CD8-positive, alpha-beta memory T cell (primary cell): ENCODE measurements at regions of chr2 and their contacts with region 1.

Region 1: GRCh38 chr2:130342533-130343275 is at the start of gene IMP4:
- DNase-seq: peak; percentile 89 to 98 (median 96)
- H3K4me3 ChIP-seq: peak within 1 kb of the TSS; percentile 90
- H3K4me3 Mint-ChIP-seq: peak within 1 kb of the TSS; percentile 96 to 100 (median 99)
- H3K27ac ChIP-seq: peak within 1 kb of the TSS; percentile 95
- H3K27ac Mint-ChIP-seq: peak within 1 kb of the TSS; percentile 93 to 100 (median 98)
- H3K4me1 ChIP-seq: peaks cover 25% of the 10 kb centered on the region
- H3K4me1 Mint-ChIP-seq: peaks cover 38 to 55% (median 49%) of the 10 kb centered on the region in 3 donors
- H3K27me3 ChIP-seq: no peaks in the 10 kb centered on the region
- H3K27me3 Mint-ChIP-seq: no peaks in the 10 kb centered on the region
- total RNA-seq, gene IMP4: 227 to 239 TPM

Region 2: GRCh38 chr2:130181325-130181879 is 161.3 kb before region 1 on chr2 and contains the start of gene SMPD4:
- CTCF ChIA-PET with region 1: interaction called, 21 read pairs
- POLR2A ChIA-PET with region 1: interaction called, 40 read pairs
- DNase-seq: peak; percentile 97 to 99 (median 98)
- H3K4me3 ChIP-seq: peak within 1 kb of the TSS; percentile 94
- H3K4me3 Mint-ChIP-seq: peak within 1 kb of the TSS; percentile 89 to 97 (median 91)
- H3K27ac ChIP-seq: peak within 1 kb of the TSS; percentile 90
- H3K27ac Mint-ChIP-seq: peak within 1 kb of the TSS; percentile 93 to 98 (median 95)
- H3K4me1 ChIP-seq: peaks cover 23% of the 10 kb centered on the region
- H3K4me1 Mint-ChIP-seq: peaks cover 18 to 44% (median 25%) of the 10 kb centered on the region in 3 donors
- H3K27me3 ChIP-seq: no peaks in the 10 kb centered on the region
- H3K27me3 Mint-ChIP-seq: peaks cover 0 to 4% of the 10 kb centered on the region in 2 donors
- total RNA-seq, gene SMPD4: 111 to 113 TPM

Region 3: GRCh38 chr2:130261970-130262760 is 80.5 kb before region 1 on chr2:
- CTCF ChIA-PET with region 1: no interaction called
- POLR2A ChIA-PET with region 1: no interaction called
- DNase-seq: no peak
- H3K4me3 ChIP-seq: no peak overlapping the region
- H3K4me3 Mint-ChIP-seq: no peak overlapping the region
- H3K27ac ChIP-seq: no peak overlapping the region
- H3K27ac Mint-ChIP-seq: no peak overlapping the region
- H3K4me1 ChIP-seq: no peaks in the 10 kb centered on the region
- H3K4me1 Mint-ChIP-seq: no peaks in the 10 kb centered on the region
- H3K27me3 ChIP-seq: no peaks in the 10 kb centered on the region
- H3K27me3 Mint-ChIP-seq: peaks cover 7 to 46% of the 10 kb centered on the region in 2 donors

Region 4: DNA sequence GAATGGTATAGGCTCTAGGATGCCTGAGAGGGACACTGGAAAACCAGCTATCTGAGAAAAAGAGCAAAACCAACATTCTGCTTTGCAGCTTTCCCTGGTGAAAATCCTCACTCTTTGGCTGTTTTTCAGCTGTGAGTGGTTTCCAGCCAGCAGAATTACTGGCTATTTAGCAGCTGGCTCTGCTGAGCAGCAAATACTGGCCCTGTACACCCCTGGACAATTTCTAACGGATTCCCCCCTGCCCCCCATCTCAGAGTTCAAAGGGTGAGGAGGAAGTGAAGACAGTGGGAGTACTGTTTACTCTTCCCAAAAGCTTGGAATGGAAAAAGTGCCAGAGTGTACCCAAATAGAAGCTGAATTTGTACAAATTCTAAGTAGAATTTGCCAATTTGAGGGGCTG is 26.1 kb before region 1 on chr2:
- CTCF ChIA-PET with region 1: no interaction called
- POLR2A ChIA-PET with region 1: no interaction called
- DNase-seq: no peak
- H3K4me3 ChIP-seq: no peak overlapping the region
- H3K4me3 Mint-ChIP-seq: no peak overlapping the region
- H3K27ac ChIP-seq: no peak overlapping the region
- H3K27ac Mint-ChIP-seq: no peak overlapping the region
- H3K4me1 ChIP-seq: no peaks in the 10 kb centered on the region
- H3K4me1 Mint-ChIP-seq: no peaks in the 10 kb centered on the region
- H3K27me3 ChIP-seq: no peaks in the 10 kb centered on the region
- H3K27me3 Mint-ChIP-seq: peaks cover 8 to 18% of the 10 kb centered on the region in 2 donors

Region 5: GRCh38 chr2:130332271-130333073 is 10.2 kb before region 1 on chr2:
- CTCF ChIA-PET with region 1: interaction called, 37 read pairs
- POLR2A ChIA-PET with region 1: interaction called, 7 read pairs
- DNase-seq: peak; percentile 52 to 77 (median 57)
- H3K4me3 ChIP-seq: no peak overlapping the region
- H3K4me3 Mint-ChIP-seq: peak overlapping the region in 5 of 7 donors; percentile 2 to 64 (median 50)
- H3K27ac ChIP-seq: no peak overlapping the region
- H3K27ac Mint-ChIP-seq: peak overlapping the region in 3 of 8 donors; percentile 10 to 64 (median 18)
- H3K4me1 ChIP-seq: peaks cover 4% of the 10 kb centered on the region
- H3K4me1 Mint-ChIP-seq: peaks cover 5 to 7% (median 6%) of the 10 kb centered on the region in 3 donors
- H3K27me3 ChIP-seq: no peaks in the 10 kb centered on the region
- H3K27me3 Mint-ChIP-seq: peaks cover 18 to 37% of the 10 kb centered on the region in 2 donors

Region 6: GRCh38 chr2:130355578-130356431 is 13.1 kb after region 1 on chr2 and contains the start of gene PTPN18:
- CTCF ChIA-PET with region 1: interaction called, 8 read pairs
- POLR2A ChIA-PET with region 1: interaction called, 12 read pairs
- DNase-seq: peak; percentile 44 to 70 (median 54)
- H3K4me3 ChIP-seq: peak within 1 kb of the TSS; percentile 66
- H3K4me3 Mint-ChIP-seq: peak within 1 kb of the TSS; percentile 81 to 91 (median 84)
- H3K27ac ChIP-seq: peak within 1 kb of the TSS; percentile 43
- H3K27ac Mint-ChIP-seq: peak within 1 kb of the TSS in 7 of 8 donors; percentile 50 to 92 (median 60)
- H3K4me1 ChIP-seq: peaks cover 5% of the 10 kb centered on the region
- H3K4me1 Mint-ChIP-seq: peaks cover 14 to 15% (median 15%) of the 10 kb centered on the region in 3 donors
- H3K27me3 ChIP-seq: no peaks in the 10 kb centered on the region
- H3K27me3 Mint-ChIP-seq: no peaks in the 10 kb centered on the region
- total RNA-seq, gene PTPN18: 55.1 to 60.0 TPM

Region 7: GRCh38 chr2:130372055-130372832 is 29.5 kb after region 1 on chr2:
- CTCF ChIA-PET with region 1: interaction called, 23 read pairs
- POLR2A ChIA-PET with region 1: interaction called, 17 read pairs
- DNase-seq: peak; percentile 57 to 80 (median 70)
- H3K4me3 ChIP-seq: peak overlapping the region; percentile 85
- H3K4me3 Mint-ChIP-seq: peak overlapping the region; percentile 92 to 97 (median 95)
- H3K27ac ChIP-seq: peak overlapping the region; percentile 76
- H3K27ac Mint-ChIP-seq: peak overlapping the region; percentile 85 to 97 (median 96)
- H3K4me1 ChIP-seq: peaks cover 35% of the 10 kb centered on the region
- H3K4me1 Mint-ChIP-seq: peaks cover 56 to 73% (median 69%) of the 10 kb centered on the region in 3 donors
- H3K27me3 ChIP-seq: no peaks in the 10 kb centered on the region
- H3K27me3 Mint-ChIP-seq: no peaks in the 10 kb centered on the region